Uterus (tissue), 4 donors: ENCODE measurements at regions of chr2 and their contacts with region 1.

Region 1: DNA sequence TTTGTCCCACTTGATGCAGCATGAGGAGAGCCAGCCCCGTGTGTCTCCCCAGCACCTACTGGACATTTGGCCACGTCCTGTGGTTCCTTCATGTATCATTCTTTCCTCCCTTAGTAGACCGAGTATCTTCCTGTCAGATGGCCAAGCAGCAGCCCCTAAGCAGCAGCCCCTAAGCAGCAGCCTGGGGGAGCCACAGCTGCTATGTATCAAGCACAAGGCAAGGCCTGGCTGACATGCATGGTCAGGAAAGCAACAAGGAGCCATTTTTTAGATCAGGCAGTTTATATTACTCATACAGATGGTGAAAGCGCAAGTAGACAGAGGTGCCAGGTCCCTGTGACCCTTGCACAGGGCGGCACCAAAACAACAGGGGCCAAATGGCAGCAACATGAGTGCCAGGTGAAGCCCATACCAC is 22.1 kb downstream of the CHCHD5 start:
- DNase-seq: no peak
- H3K4me3 ChIP-seq: no peak overlapping the region
- H3K27ac ChIP-seq: no peak overlapping the region
- H3K4me1 ChIP-seq: no peaks in the 10 kb centered on the region
- H3K27me3 ChIP-seq: no peaks in the 10 kb centered on the region
- CTCF ChIP-seq: no peak
- POLR2A ChIP-seq: no peak

Region 2: DNA sequence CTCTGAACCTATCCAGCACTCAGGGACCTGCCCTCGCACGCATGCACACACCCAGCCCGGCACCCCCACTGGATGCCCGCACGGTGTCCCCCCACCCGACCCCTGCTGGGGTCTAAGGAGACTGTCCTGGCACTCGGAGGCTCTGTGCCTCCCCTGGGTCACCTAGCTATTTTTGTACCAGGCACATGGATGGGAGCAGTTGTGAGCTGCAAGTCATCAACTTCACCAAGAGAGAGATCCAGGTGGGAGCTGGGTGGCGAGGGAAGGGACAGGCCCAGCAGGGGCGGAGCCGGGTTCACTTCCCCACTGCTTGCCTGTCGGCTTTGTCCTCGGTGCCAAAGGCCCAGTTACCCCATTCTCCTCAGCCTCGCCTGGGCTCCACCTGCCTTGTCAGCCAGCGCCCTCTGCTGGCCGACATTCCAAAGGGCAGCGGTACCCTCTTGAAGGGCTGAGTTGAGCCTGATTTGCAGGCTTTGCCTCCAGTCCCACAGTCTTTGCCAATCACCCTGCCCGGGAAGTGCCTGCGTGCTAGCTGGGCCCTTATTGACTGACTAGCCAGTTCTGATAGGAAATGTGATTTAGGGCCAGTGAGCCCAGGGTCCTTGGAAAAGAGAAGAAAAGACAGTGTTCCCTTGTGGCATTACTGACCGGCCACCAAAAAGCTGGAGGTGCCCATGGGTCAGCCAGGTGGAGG is 120.1 kb after region 1 on chr2:
- intact Hi-C with region 1: loop called (anchors 10 kb)
- DNase-seq: peak; percentile 63 to 69
- H3K4me3 ChIP-seq: no peak overlapping the region
- H3K27ac ChIP-seq: no peak overlapping the region
- H3K4me1 ChIP-seq: no peaks in the 10 kb centered on the region
- H3K27me3 ChIP-seq: no peaks in the 10 kb centered on the region
- CTCF ChIP-seq: peak; percentile 73 to 84 (median 75)
- POLR2A ChIP-seq: no peak